Endothelial cell of umbilical vein (primary cell): ENCODE measurements at regions of chr1 and their contacts with region 1.

Region 1: GRCh38 chr1:205321164-205321958 is at the start of gene NUAK2:
- DNase-seq: peak; percentile 89
- H3K4me3 ChIP-seq: peak within 1 kb of the TSS; percentile 58 to 68 (median 65)
- H3K27ac ChIP-seq: no peak within 1 kb of the TSS
- H3K4me1 ChIP-seq: peaks cover 18% of the 10 kb centered on the region
- H3K27me3 ChIP-seq: peaks cover 0 to 3% of the 10 kb centered on the region in 2 experiments
- CTCF ChIP-seq: peak; percentile 8 to 43
- POLR2A ChIP-seq: no peak
- total RNA-seq, gene NUAK2: 2.3 and 2.5 TPM in 2 replicates

Region 2: GRCh38 chr1:204145033-204145504 is 1176.3 kb before region 1 on chr1:
- CTCF ChIA-PET with region 1: no interaction called
- POLR2A ChIA-PET with region 1: no interaction called
- dilution Hi-C with region 1: no loop called
- intact Hi-C with region 1: no loop called
- DNase-seq: no peak
- H3K4me3 ChIP-seq: no peak overlapping the region
- H3K27ac ChIP-seq: no peak overlapping the region
- H3K4me1 ChIP-seq: no peaks in the 10 kb centered on the region
- H3K27me3 ChIP-seq: no peaks in the 10 kb centered on the region
- CTCF ChIP-seq: no peak
- POLR2A ChIP-seq: no peak

Region 3: GRCh38 chr1:204989266-204990058 is 331.9 kb before region 1 on chr1:
- CTCF ChIA-PET with region 1: interaction called, 9 read pairs
- POLR2A ChIA-PET with region 1: no interaction called
- dilution Hi-C with region 1: no loop called
- intact Hi-C with region 1: loop called (anchors 2 kb)
- DNase-seq: peak; percentile 76
- H3K4me3 ChIP-seq: no peak overlapping the region
- H3K27ac ChIP-seq: no peak overlapping the region
- H3K4me1 ChIP-seq: no peaks in the 10 kb centered on the region
- H3K27me3 ChIP-seq: peaks cover 0 to 19% of the 10 kb centered on the region in 2 experiments
- CTCF ChIP-seq: peak; percentile 92 to 98
- POLR2A ChIP-seq: no peak

Region 4: DNA sequence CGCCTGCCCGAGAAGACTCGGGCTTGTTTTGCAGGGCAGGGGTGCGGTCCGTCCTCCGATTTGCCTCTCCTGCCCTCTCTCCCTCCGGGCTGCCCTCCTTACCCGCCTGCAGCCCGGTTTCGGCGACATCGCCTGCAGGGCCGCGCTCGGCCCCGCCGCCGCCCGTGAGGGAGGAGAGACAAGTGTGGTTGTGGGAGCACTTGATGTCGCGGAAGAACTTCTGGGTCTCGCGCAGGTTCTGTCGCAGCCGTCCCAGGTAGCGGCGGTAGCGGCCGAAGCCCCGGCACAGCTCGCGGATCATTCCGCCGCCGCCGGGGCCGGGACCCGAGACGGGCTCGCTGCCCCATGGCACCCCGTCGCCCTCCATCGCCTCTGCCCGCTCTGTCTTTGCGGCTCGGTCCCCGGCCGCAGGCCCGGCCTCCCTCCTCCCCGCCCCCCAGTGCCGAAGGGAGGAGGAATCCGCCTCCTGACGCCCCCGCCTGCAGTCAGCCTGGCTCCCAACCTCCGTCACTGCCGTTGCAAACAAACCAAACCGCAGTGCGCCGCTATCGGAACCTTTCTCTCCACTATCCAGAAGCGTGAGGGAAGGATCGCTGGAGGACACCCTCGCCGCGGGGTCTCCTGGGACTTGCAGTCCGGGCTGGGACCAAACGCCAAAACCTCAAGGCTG is 110.1 kb before region 1 on chr1 and contains the start of gene DSTYK:
- CTCF ChIA-PET with region 1: no interaction called
- POLR2A ChIA-PET with region 1: no interaction called
- dilution Hi-C with region 1: no loop called
- intact Hi-C with region 1: no loop called
- DNase-seq: peak; percentile 95
- H3K4me3 ChIP-seq: peak within 1 kb of the TSS; percentile 81 to 90 (median 89)
- H3K27ac ChIP-seq: peak within 1 kb of the TSS; percentile 14
- H3K4me1 ChIP-seq: peaks cover 7% of the 10 kb centered on the region
- H3K27me3 ChIP-seq: peaks cover 9 to 15% of the 10 kb centered on the region in 2 experiments
- CTCF ChIP-seq: no peak
- POLR2A ChIP-seq: peak; percentile 54
- total RNA-seq, gene DSTYK: 8.1 and 8.7 TPM in 2 replicates

Region 5: GRCh38 chr1:205284343-205285144 is 36.8 kb before region 1 on chr1:
- CTCF ChIA-PET with region 1: interaction called, 1,536 read pairs
- POLR2A ChIA-PET with region 1: interaction called, 7 read pairs
- dilution Hi-C with region 1: no loop called
- intact Hi-C with region 1: loop called (anchors 1 kb)
- DNase-seq: peak; percentile 95
- H3K4me3 ChIP-seq: no peak overlapping the region
- H3K27ac ChIP-seq: peak overlapping the region; percentile 45
- H3K4me1 ChIP-seq: peaks cover 34% of the 10 kb centered on the region
- H3K27me3 ChIP-seq: no peaks in the 10 kb centered on the region
- CTCF ChIP-seq: peak in 1 of 2 donors; percentile 9
- POLR2A ChIP-seq: peak; percentile 33

Region 6: GRCh38 chr1:205294175-205294913 is 27.0 kb before region 1 on chr1:
- CTCF ChIA-PET with region 1: interaction called, 49 read pairs
- POLR2A ChIA-PET with region 1: interaction called, 9 read pairs
- dilution Hi-C with region 1: no loop called
- intact Hi-C with region 1: loop called (anchors 1 kb)
- DNase-seq: peak; percentile 91
- H3K4me3 ChIP-seq: no peak overlapping the region
- H3K27ac ChIP-seq: peak overlapping the region; percentile 61
- H3K4me1 ChIP-seq: peaks cover 30% of the 10 kb centered on the region
- H3K27me3 ChIP-seq: no peaks in the 10 kb centered on the region
- CTCF ChIP-seq: no peak
- POLR2A ChIP-seq: no peak

Region 7: DNA sequence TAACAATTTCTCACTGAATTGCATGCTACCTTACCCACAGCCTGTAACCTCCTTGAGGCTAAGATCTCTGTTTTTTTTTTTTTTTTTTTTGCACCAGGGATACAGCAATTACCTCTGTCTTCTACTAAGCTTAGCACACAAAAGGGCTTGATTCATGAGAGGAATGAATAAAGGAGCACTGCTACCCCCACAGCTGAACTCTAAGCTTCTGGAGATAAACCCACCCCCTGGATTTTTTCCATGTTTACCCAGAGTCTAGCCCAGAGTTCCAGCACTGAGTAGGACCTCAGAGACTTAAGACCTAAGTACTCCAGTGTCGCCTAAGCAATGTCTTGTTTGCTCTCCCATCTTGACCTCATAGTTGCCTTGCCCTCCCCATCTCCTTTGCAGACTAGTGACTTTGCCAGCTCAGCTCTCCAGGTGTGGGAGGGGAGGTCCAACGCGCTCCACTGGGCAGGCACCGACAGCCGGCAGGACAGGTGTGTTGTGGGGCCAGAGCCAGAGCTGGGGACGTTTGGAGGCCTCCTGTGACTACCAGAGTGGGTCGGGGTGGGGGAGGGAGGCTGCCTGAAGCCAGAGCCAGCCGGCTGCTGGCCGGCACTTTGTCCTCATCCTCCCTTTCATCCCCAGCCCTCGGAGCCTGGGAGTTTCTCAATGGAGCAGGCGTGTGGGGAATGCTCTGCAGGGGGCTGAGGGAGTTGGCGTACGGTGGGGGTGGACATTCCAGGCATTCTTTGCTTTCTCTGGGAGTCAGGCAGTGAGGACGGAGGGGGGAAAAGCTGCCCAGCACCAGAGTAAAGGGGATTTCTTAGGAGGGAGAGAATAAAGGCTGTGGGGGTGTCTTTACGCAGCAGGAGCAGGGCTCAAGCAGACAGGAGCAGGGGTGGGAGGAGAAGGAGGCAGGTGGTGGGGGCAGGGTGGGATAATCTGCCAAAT is 20.2 kb before region 1 on chr1:
- CTCF ChIA-PET with region 1: interaction called, 49 read pairs
- POLR2A ChIA-PET with region 1: no interaction called
- dilution Hi-C with region 1: no loop called
- intact Hi-C with region 1: loop called (anchors 1 kb)
- DNase-seq: peak; percentile 62
- H3K4me3 ChIP-seq: no peak overlapping the region
- H3K27ac ChIP-seq: no peak overlapping the region
- H3K4me1 ChIP-seq: peaks cover 17% of the 10 kb centered on the region
- H3K27me3 ChIP-seq: no peaks in the 10 kb centered on the region
- CTCF ChIP-seq: no peak
- POLR2A ChIP-seq: no peak

Region 8: DNA sequence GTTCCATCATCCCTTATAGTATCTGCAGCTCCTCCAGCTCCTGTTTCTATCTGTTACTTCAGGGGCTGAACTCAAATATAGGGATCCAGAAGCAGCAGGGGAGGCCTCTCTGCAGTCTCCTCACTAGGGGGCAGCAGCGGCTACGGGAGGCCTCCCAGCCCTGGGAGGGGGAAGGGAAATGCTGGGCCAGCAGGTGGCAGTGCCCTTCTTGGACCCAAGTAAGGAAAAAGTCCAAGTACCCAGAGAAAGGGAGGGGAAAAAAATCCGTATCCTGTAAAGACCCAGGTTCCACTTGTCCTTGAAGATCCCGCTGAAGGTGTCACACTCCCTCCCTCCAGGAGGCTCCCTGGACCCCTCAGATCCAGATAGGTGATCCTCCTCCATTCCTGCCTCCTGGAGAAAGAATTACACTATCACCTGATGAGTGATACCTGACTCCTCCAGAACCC is 14.3 kb after region 1 on chr1:
- CTCF ChIA-PET with region 1: interaction called, 27 read pairs
- POLR2A ChIA-PET with region 1: no interaction called
- dilution Hi-C with region 1: no loop called
- intact Hi-C with region 1: no loop called
- DNase-seq: peak; percentile 85
- H3K4me3 ChIP-seq: no peak overlapping the region
- H3K27ac ChIP-seq: no peak overlapping the region
- H3K4me1 ChIP-seq: no peaks in the 10 kb centered on the region
- H3K27me3 ChIP-seq: peaks cover 8 to 14% of the 10 kb centered on the region in 2 experiments
- CTCF ChIP-seq: peak; percentile 97
- POLR2A ChIP-seq: no peak